Ascending aorta (tissue), 2 donors: ENCODE measurements at regions of chr5 and their contacts with region 1.

Region 1: DNA sequence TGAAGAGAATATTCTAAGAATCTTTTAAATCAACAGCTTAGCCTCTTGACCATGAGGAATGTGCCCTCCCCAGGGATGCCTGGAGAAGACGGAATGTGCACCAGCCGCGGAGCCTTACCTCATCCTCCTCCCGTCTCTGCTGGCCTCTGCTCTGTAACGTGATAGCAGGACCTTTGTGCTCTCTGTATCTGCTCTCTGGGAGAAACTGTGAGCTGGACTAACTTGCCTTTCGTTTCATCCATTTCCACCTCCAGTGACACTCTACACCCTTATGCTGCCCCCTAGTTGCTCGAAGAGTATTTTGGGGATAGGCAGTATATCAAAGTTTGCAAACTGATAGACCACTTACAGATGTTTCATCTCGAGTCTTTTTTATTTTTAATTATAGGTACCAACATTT is 141.4 kb downstream of the NPR3 start:
- DNase-seq: peak in 1 of 2 donors; percentile 75
- H3K4me3 ChIP-seq: peak overlapping the region in 1 of 2 donors; percentile 31
- H3K27ac ChIP-seq: peak overlapping the region; percentile 49 to 61
- H3K4me1 ChIP-seq: peaks cover 0 to 7% of the 10 kb centered on the region in 2 donors
- H3K27me3 ChIP-seq: no peaks in the 10 kb centered on the region
- CTCF ChIP-seq: peak; percentile 25 to 58 (median 30)

Region 2: GRCh38 chr5:32780508-32780919 is 72.0 kb before region 1 on chr5:
- intact Hi-C with region 1: loop called (anchors 5 kb)
- DNase-seq: peak in 1 of 2 donors; percentile 70
- H3K4me3 ChIP-seq: peak overlapping the region in 1 of 2 donors; percentile 39
- H3K27ac ChIP-seq: peak overlapping the region; percentile 61 to 78
- H3K4me1 ChIP-seq: peaks cover 0 to 10% of the 10 kb centered on the region in 2 donors
- H3K27me3 ChIP-seq: no peaks in the 10 kb centered on the region
- CTCF ChIP-seq: no peak

Region 3: GRCh38 chr5:33398501-33398900 is 546.0 kb after region 1 on chr5:
- intact Hi-C with region 1: no loop called
- DNase-seq: no peak
- H3K4me3 ChIP-seq: no peak overlapping the region
- H3K27ac ChIP-seq: no peak overlapping the region
- H3K4me1 ChIP-seq: peaks cover 0 to 6% of the 10 kb centered on the region in 2 donors
- H3K27me3 ChIP-seq: no peaks in the 10 kb centered on the region
- CTCF ChIP-seq: no peak